CD8-positive, alpha-beta T cell (primary cell): ENCODE measurements at regions of chr12 and their contacts with region 1.

Region 1: GRCh38 chr12:112108201-112109079 is at the start of gene NAA25:
- DNase-seq: peak; percentile 66 to 92 (median 87)
- ATAC-seq: peak; percentile 80
- H3K4me3 ChIP-seq: peak within 1 kb of the TSS; percentile 91 to 100
- H3K4me3 Mint-ChIP-seq: peak within 1 kb of the TSS; percentile 97
- H3K27ac ChIP-seq: peak within 1 kb of the TSS; percentile 80 to 92
- H3K27ac Mint-ChIP-seq: peak within 1 kb of the TSS; percentile 96
- H3K4me1 ChIP-seq: peaks cover 35% of the 10 kb centered on the region
- H3K4me1 Mint-ChIP-seq: peaks cover 44% of the 10 kb centered on the region
- H3K27me3 ChIP-seq: no peaks in the 10 kb centered on the region
- H3K27me3 Mint-ChIP-seq: no peaks in the 10 kb centered on the region
- CTCF ChIP-seq: no peak
- total RNA-seq, gene NAA25: 35.1 to 35.3 TPM

Region 2: GRCh38 chr12:112125250-112125999 is 17.0 kb after region 1 on chr12 and contains the start of gene TRAFD1:
- CTCF ChIA-PET with region 1: interaction called, 5 read pairs
- POLR2A ChIA-PET with region 1: interaction called, 51 read pairs
- intact Hi-C with region 1: loop called (anchors 1 kb)
- DNase-seq: peak; percentile 96 to 99 (median 98)
- ATAC-seq: peak; percentile 97
- H3K4me3 ChIP-seq: peak within 1 kb of the TSS; percentile 93 to 98
- H3K4me3 Mint-ChIP-seq: peak within 1 kb of the TSS; percentile 85
- H3K27ac ChIP-seq: peak within 1 kb of the TSS; percentile 82 to 89
- H3K27ac Mint-ChIP-seq: peak within 1 kb of the TSS; percentile 87
- H3K4me1 ChIP-seq: peaks cover 38% of the 10 kb centered on the region
- H3K4me1 Mint-ChIP-seq: peaks cover 40% of the 10 kb centered on the region
- H3K27me3 ChIP-seq: no peaks in the 10 kb centered on the region
- H3K27me3 Mint-ChIP-seq: no peaks in the 10 kb centered on the region
- CTCF ChIP-seq: no peak
- total RNA-seq, gene TRAFD1: 21.1 to 25.4 TPM

Region 3: DNA sequence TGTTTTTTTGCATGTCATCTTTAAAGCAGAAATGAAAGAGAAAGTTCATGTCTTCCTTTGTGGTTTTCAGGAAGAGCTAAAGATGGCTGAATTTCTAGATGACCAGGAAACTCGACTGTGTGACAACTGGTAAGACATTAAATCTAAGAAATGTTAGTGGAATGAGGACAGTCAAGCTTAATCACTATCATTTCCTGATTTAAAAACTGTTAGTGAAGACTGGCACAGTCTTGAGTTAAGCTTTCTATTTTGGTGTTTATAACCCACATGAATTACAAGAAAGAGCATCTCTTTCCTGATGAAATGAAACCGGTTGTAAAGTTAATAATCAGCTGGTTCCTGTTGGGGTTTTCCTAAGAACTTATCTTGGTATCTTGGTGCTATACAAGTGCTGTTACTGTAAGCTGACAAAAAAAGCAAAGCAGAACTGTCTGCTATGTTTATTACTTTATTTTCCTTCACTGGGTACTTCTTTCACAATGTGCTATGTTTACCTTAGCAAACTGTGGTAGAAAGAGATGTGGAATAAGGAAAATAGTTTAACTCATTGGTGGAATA is 22.1 kb after region 1 on chr12:
- CTCF ChIA-PET with region 1: interaction called, 4 read pairs
- POLR2A ChIA-PET with region 1: interaction called, 51 read pairs
- intact Hi-C with region 1: loop called (anchors 1 kb)
- DNase-seq: peak in 2 of 9 experiments; percentile 69 to 85
- ATAC-seq: peak; percentile 54
- H3K4me3 ChIP-seq: peak overlapping the region; percentile 11 to 24
- H3K4me3 Mint-ChIP-seq: peak overlapping the region; percentile 30
- H3K27ac ChIP-seq: peak overlapping the region; percentile 38 to 83
- H3K27ac Mint-ChIP-seq: peak overlapping the region; percentile 64
- H3K4me1 ChIP-seq: peaks cover 56% of the 10 kb centered on the region
- H3K4me1 Mint-ChIP-seq: peaks cover 59% of the 10 kb centered on the region
- H3K27me3 ChIP-seq: no peaks in the 10 kb centered on the region
- H3K27me3 Mint-ChIP-seq: no peaks in the 10 kb centered on the region
- CTCF ChIP-seq: no peak

Region 4: GRCh38 chr12:112161711-112162110 is 53.3 kb after region 1 on chr12:
- CTCF ChIA-PET with region 1: no interaction called
- POLR2A ChIA-PET with region 1: no interaction called
- intact Hi-C with region 1: no loop called
- DNase-seq: no peak
- ATAC-seq: no peak
- H3K4me3 ChIP-seq: no peak overlapping the region
- H3K4me3 Mint-ChIP-seq: no peak overlapping the region
- H3K27ac ChIP-seq: no peak overlapping the region
- H3K27ac Mint-ChIP-seq: peak overlapping the region; percentile 60
- H3K4me1 ChIP-seq: peaks cover 18% of the 10 kb centered on the region
- H3K4me1 Mint-ChIP-seq: peaks cover 23% of the 10 kb centered on the region
- H3K27me3 ChIP-seq: no peaks in the 10 kb centered on the region
- H3K27me3 Mint-ChIP-seq: no peaks in the 10 kb centered on the region
- CTCF ChIP-seq: no peak

Region 5: DNA sequence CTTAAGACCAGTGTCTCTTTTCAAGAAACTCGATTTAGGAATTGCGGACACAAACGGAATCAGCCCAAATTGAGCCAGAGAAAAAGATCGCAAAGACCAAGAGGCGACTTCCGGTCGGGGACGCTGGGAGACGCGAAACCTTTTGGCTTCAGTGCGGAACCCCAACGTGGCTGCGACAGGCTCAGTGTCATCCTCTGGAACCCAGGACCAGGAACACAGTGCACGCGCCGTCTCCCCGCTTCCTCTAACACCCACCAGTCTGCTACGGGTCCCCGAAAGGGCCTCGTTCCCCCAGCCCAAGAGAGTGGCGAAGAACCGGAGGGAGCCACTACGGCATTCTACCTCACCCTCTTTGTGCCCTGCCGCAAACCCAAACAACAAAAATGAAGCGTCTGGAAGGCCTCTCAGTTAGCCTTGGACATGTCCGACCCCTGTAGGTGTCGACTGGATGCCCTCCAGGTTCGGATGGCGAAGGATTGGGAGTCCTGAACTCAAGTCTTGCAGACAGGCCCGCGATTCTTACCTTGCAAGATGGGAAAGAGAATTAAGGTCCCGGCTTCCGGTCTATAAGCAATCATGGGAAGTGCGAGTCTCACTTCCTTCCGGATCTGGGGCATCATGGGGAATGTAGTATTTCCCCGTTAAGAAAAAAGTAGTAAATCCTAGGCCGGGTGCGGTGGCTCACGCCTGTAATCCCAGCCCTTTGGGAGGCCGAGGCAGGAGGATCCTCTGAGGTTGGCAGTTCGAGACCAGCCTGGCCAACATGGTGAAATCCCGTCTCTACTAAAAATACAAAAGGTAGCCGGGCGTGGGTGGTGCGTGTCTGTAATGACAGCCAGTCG is 300.8 kb after region 1 on chr12 and contains the start of gene RPL6:
- CTCF ChIA-PET with region 1: no interaction called
- POLR2A ChIA-PET with region 1: no interaction called
- intact Hi-C with region 1: loop called (anchors 2 to 5 kb)
- DNase-seq: peak; percentile 56 to 93 (median 75)
- ATAC-seq: peak; percentile 81
- H3K4me3 ChIP-seq: peak within 1 kb of the TSS; percentile 83 to 89
- H3K4me3 Mint-ChIP-seq: peak within 1 kb of the TSS; percentile 100
- H3K27ac ChIP-seq: peak within 1 kb of the TSS; percentile 87 to 92
- H3K27ac Mint-ChIP-seq: peak within 1 kb of the TSS; percentile 100
- H3K4me1 ChIP-seq: peaks cover 28% of the 10 kb centered on the region
- H3K4me1 Mint-ChIP-seq: peaks cover 38% of the 10 kb centered on the region
- H3K27me3 ChIP-seq: no peaks in the 10 kb centered on the region
- H3K27me3 Mint-ChIP-seq: no peaks in the 10 kb centered on the region
- CTCF ChIP-seq: no peak
- total RNA-seq, gene RPL6: 1,700 to 1,770 TPM